WTC11 (cell line): ENCODE measurements at regions of chrX and their contacts with region 1.

Region 1: DNA sequence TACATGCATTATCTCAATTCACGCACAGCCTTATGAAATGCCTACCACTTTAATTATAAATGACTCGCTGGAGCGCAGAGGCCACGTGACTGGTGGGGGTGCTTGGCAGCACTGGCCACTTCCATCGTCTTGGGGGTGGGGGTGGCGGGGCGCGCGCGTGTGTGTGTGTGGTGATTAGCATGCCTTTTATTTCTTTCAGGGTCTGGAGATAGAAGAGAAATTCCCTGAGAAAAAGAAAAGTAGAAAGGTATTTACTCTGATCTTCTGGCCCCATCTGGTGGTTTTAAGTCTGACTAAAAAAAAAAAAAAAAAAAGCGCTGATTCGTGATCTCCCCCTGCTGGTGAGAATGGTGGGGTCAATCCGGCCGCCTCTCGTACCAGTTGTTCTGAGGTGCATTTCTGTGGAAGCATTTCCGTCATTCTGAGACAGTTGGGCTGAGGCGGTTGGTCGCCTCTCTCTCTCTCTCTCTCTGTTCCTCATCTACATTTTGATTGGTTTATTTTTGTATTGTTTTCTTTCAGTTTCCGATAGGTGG is at the start of gene CCNB3:
- DNase-seq: peak; percentile 54
- ATAC-seq: peak; percentile 79
- H3K4me3 Mint-ChIP-seq: peak within 1 kb of the TSS; percentile 58
- H3K27ac Mint-ChIP-seq: peak within 1 kb of the TSS; percentile 62; the same call in 1 of the 2 replicates
- H3K4me1 Mint-ChIP-seq: peaks cover 14% of the 10 kb centered on the region
- H3K27me3 Mint-ChIP-seq: no peaks in the 10 kb centered on the region; the same call in 1 of the 2 replicates
- CTCF ChIP-seq: peak; percentile 54
- total RNA-seq, gene CCNB3: 0.13 to 0.85 TPM (median 0.34 TPM) in 3 replicates

Region 2: DNA sequence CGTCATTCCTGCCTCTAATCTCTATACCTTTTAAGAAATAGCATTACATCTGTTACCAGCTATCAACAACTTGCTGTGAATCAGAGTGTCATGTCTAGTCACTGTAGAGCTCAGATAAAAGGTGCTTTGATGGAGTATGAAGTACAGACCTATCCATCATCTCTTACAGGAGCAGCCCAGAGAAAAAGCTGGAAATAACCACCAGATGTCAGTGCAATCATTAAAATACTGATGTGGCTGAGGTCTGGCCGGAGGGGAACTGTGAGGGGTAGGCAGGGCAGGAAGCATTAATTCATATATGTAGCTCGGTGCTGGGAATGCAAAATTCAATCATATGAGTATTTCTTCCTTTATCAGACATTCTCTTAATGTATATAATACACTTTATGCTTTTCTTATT is 104.2 kb before region 1 on chrX:
- CTCF ChIA-PET with region 1: interaction called, 14 read pairs
- POLR2A ChIA-PET with region 1: no interaction called
- DNase-seq: no peak
- ATAC-seq: peak; percentile 70
- H3K4me3 Mint-ChIP-seq: no peak overlapping the region
- H3K27ac Mint-ChIP-seq: no peak overlapping the region
- H3K4me1 Mint-ChIP-seq: no peaks in the 10 kb centered on the region
- H3K27me3 Mint-ChIP-seq: no peaks in the 10 kb centered on the region
- CTCF ChIP-seq: no peak